Activated naive CD4-positive, alpha-beta T cell treated with anti-CD3 and anti-CD28 coated beads for 36 hours (primary cell): ENCODE measurements at regions of chr17 and their contacts with region 1.

Region 1: DNA sequence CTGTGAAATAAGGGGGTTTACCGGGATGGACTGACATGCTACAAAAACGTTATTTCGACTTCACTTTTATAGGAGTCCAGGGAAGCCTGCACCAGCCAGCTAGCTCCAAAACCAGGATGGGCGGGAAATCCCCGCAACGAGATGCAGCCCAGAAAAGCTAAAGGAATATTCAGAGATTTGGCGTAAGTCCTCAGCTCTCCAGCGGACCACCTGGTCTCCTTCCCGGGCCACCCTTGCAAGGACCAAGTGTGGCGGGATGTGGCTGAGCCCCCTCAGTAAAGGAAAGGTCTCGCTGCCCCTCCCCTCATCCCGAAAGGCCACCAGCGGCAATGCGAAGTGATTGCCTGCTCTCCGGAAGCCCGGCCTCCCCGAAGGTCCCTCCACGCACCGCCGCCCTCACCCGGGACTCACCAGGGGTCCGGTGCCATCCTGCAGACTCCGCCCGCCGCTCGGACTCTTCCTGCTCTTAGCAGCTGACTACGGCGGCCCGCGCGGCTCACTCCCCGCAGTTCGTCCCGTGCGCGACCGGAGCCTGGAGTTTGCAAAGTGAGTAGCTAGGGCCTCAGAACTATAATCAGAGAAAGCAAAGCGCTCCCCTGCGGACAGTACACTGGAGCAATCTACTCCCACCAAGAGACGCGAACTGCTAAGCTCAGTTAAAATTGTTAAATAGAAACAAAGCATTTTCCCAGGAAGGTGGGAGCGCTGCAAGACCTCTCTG is at the start of gene STX8:
- DNase-seq: peak; percentile 87
- H3K4me3 Mint-ChIP-seq: peak within 1 kb of the TSS; percentile 84
- H3K27ac Mint-ChIP-seq: peak within 1 kb of the TSS; percentile 59
- H3K4me1 Mint-ChIP-seq: peaks cover 22% of the 10 kb centered on the region
- H3K27me3 Mint-ChIP-seq: no peaks in the 10 kb centered on the region
- total RNA-seq, gene STX8: 60.6 to 68.0 TPM

Region 2: GRCh38 chr17:9484789-9485188 is 90.8 kb before region 1 on chr17:
- CTCF ChIA-PET with region 1: no interaction called
- intact Hi-C with region 1: no loop called
- DNase-seq: no peak
- H3K4me3 Mint-ChIP-seq: no peak overlapping the region
- H3K27ac Mint-ChIP-seq: no peak overlapping the region
- H3K4me1 Mint-ChIP-seq: no peaks in the 10 kb centered on the region
- H3K27me3 Mint-ChIP-seq: no peaks in the 10 kb centered on the region

Region 3: DNA sequence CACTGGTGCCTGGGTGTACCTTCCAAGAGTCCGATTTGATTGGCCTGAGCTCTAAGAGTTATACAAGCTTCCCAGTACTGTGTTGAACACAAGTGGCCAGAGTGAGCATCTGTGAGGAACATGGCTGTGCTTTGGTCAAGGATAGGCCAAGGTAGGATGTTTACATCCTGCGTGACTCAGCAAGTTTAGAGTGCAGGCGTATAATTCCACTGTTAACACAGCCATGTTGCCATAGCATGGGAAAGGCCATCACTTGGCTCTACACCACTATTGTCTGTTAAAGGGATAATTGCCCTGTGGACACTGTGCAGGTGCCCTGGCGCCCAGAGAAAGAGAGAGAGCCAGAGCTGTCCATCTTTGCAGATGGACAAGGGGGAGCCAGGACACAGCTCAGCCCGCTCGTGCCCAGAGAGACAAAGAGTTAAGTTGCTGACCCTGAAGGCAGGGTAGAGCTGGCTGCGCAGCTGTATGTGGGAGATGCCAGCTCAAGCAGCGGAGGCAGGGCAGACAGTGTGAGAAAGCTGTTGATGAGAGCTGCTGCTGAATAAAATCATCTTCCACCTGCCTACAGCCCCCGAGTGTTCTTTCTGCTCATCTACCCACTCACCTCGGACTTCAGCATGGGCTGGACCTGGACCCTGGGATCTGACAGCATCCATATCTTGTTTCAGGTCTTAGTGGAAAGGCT is 12.6 kb after region 1 on chr17:
- CTCF ChIA-PET with region 1: interaction called, 10 read pairs
- intact Hi-C with region 1: no loop called
- DNase-seq: no peak
- H3K4me3 Mint-ChIP-seq: no peak overlapping the region
- H3K27ac Mint-ChIP-seq: no peak overlapping the region
- H3K4me1 Mint-ChIP-seq: no peaks in the 10 kb centered on the region
- H3K27me3 Mint-ChIP-seq: no peaks in the 10 kb centered on the region

Region 4: GRCh38 chr17:9594065-9594464 is 18.5 kb after region 1 on chr17:
- CTCF ChIA-PET with region 1: interaction called, 11 read pairs
- intact Hi-C with region 1: no loop called
- DNase-seq: no peak
- H3K4me3 Mint-ChIP-seq: no peak overlapping the region
- H3K27ac Mint-ChIP-seq: no peak overlapping the region
- H3K4me1 Mint-ChIP-seq: no peaks in the 10 kb centered on the region
- H3K27me3 Mint-ChIP-seq: no peaks in the 10 kb centered on the region

Region 5: DNA sequence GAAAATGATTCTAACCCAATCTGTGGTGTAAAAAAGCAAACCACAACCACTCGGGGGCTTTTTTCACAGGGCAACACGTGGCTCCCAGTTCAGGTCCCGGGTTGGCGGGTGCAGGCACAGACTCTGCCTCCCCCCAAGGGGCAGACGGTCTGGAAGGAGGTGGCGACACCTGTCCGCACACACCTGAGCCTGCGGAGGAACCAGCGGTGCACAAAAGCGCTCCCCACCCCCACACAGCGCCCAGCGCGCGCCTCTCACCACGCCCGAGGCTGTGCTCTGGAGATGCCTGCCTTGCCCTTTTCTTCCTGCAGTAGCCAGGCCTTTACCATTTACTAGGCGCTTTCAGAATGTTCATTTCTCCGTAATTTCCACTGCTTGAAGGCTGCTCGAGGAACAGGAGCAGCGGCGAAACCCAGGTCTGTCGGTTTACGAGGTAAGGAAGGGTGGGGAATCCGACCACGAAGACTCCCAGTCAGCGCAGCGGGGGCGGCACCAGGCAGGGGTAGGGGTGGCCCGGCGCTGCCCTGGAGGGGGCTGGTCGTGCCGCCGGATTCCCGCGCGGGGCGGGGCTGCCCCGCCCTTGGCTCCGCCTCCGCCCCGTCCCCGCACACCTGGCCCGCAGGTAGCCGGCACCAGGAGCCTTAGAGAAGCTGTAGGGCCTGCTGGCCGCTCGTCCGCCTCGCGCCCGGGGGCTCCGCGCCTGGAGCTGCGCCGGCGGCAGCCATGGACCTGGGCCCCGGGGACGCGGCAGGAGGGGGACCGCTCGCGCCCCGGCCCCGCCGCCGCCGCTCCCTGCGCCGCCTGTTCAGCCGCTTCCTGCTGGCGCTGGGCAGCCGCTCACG is 69.6 kb after region 1 on chr17 and contains the start of gene USP43:
- CTCF ChIA-PET with region 1: no interaction called
- intact Hi-C with region 1: loop called (anchors 2 kb)
- DNase-seq: peak; percentile 41
- H3K4me3 Mint-ChIP-seq: peak within 1 kb of the TSS; percentile 78
- H3K27ac Mint-ChIP-seq: no peak within 1 kb of the TSS
- H3K4me1 Mint-ChIP-seq: no peaks in the 10 kb centered on the region
- H3K27me3 Mint-ChIP-seq: peaks cover 51% of the 10 kb centered on the region
- total RNA-seq, gene USP43: 0.17 to 0.24 TPM

Region 6: DNA sequence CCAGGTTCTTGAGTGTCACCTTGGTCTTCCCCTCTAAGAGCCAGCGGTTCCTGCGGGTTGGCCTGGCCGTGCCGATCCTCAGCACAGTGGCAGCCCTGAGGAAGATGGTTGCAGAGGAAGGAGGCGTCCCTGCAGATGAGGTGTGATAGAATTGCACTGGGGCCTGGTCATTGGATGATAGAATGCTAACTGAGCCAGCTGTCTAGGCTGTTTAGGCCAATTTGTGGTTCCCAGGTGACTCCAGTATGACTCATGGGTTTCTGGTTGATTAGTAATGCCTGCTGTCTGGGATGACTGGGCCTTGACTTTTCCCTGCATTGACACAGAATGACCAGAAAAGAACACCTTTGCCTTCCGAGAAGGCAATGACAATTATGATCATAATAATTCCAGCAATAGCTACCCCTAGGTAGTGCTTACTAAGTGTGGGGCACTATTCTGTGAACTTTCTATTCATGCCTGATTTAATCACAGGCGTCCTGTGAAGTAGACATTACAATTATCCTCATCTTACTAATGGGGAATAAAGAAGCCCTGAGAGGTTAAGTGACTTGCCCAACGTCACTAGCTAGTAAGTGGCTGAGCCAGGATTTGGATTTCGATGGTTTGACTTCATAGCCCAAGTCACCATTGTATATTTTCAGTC is 101.3 kb after region 1 on chr17:
- CTCF ChIA-PET with region 1: interaction called, 12 read pairs
- intact Hi-C with region 1: loop called (anchors 1 kb)
- DNase-seq: peak; percentile 35
- H3K4me3 Mint-ChIP-seq: no peak overlapping the region
- H3K27ac Mint-ChIP-seq: no peak overlapping the region
- H3K4me1 Mint-ChIP-seq: no peaks in the 10 kb centered on the region
- H3K27me3 Mint-ChIP-seq: peaks cover 8% of the 10 kb centered on the region

Region 7: DNA sequence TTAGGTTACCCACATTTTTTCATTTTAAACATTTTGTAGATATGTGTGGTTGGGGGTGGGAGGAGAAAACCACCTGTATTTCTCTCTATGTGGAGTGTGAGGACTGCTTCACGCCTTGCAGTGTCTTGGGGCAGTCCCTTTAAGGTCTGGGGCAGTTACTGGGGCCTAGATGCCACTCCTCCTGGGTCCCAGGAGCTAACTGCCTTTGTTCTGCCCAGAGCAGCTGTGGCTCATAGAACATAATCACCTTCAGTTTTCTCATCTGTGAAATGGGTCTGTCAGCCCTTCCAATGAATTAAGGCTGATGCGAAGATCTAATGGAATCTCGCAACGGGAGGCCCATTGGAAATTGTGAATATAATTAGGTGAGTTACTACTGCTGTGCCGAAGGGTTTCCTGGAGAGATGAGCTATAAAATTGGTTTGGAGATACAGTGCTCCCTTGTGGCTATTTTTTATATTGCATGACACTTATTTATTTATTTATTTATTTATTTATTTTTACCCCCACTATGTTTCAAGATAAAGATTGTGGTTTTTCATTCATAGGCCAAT is 192.9 kb after region 1 on chr17:
- CTCF ChIA-PET with region 1: no interaction called
- intact Hi-C with region 1: loop called (anchors 1 kb)
- DNase-seq: no peak
- H3K4me3 Mint-ChIP-seq: no peak overlapping the region
- H3K27ac Mint-ChIP-seq: no peak overlapping the region
- H3K4me1 Mint-ChIP-seq: no peaks in the 10 kb centered on the region
- H3K27me3 Mint-ChIP-seq: peaks cover 9% of the 10 kb centered on the region